Naive thymus-derived CD4-positive, alpha-beta T cell (primary cell): ENCODE measurements at regions of chr14 and their contacts with region 1.

Region 1: GRCh38 chr14:100547633-100548294 is 39.5 kb downstream of the BEGAIN start:
- DNase-seq: peak in 6 of 9 donors; percentile 43 to 90 (median 79)
- ATAC-seq: peak; percentile 76
- H3K4me3 ChIP-seq: peak overlapping the region; percentile 50
- H3K4me3 Mint-ChIP-seq: peak overlapping the region; percentile 51 to 87 (median 82)
- H3K27ac ChIP-seq: peak overlapping the region; percentile 73
- H3K27ac Mint-ChIP-seq: peak overlapping the region; percentile 58 to 98 (median 89)
- H3K4me1 ChIP-seq: peaks cover 27 to 28% of the 10 kb centered on the region in 2 donors
- H3K4me1 Mint-ChIP-seq: peaks cover 9 to 38% (median 22%) of the 10 kb centered on the region in 7 donors
- H3K27me3 ChIP-seq: no peaks in the 10 kb centered on the region
- H3K27me3 Mint-ChIP-seq: no peaks in the 10 kb centered on the region

Region 2: GRCh38 chr14:99971087-99971940 is 576.5 kb before region 1 on chr14:
- CTCF ChIA-PET with region 1: no interaction called
- POLR2A ChIA-PET with region 1: no interaction called
- intact Hi-C with region 1: loop called in 1 of 2 experiments (anchors 5 kb)
- DNase-seq: peak; percentile 69 to 87 (median 81)
- ATAC-seq: peak; percentile 95
- H3K4me3 ChIP-seq: peak overlapping the region; percentile 53
- H3K4me3 Mint-ChIP-seq: peak overlapping the region; percentile 43 to 93 (median 76)
- H3K27ac ChIP-seq: peak overlapping the region; percentile 58
- H3K27ac Mint-ChIP-seq: peak overlapping the region in 4 of 9 donors; percentile 21 to 87 (median 48)
- H3K4me1 ChIP-seq: no peaks in the 10 kb centered on the region
- H3K4me1 Mint-ChIP-seq: peaks cover 7 to 21% (median 15%) of the 10 kb centered on the region in 7 donors
- H3K27me3 ChIP-seq: no peaks in the 10 kb centered on the region
- H3K27me3 Mint-ChIP-seq: peaks cover 0 to 33% (median 7%) of the 10 kb centered on the region in 5 donors